Cardiac septum (tissue), 1 donor: ENCODE measurements at regions of chr15 and their contacts with region 1.

Region 1: DNA sequence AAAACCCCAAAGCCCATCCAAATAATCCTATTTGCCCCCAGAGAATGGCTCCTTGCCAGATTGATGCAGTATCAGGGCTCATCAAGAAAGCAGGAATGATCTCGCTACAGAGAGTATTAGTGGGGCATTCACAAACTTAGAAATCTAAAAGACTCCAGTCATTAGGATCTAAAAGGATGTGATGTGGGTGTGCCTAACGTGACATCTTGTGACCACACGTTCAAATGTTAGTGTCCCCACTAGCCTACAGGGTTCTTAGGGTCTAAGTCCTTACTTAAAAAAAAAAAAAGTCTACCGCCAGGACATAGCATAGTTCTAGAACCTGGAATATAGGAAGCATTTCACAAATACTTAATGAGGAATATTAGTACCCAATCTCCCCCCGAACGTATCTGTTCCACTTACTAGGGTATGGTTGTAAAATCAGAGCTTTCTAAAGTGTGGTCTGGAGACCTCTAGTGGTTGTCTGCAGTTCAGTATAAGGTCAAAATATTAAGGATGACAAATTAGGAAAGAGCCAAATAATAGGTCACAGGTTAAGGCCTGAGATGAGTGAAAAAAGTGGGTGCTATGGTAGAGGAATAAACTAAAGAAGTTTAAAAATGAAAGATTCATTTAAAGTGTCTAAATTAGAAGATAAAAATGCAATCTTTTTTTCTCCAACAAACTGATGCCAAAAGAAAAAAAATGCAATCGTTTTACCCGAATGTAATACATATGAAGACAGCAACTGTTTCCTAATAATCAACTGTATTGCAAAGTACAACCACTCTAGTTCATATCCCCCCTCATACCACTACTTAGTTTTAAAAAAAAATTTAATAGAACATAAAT is 4.2 kb upstream of the CHRM5 start:
- DNase-seq: no peak

Region 2: GRCh38 chr15:33742800-33743199 is 221.2 kb before region 1 on chr15:
- intact Hi-C with region 1: loop called (anchors 10 kb)
- DNase-seq: no peak

Region 3: GRCh38 chr15:33915571-33916407 is 48.3 kb before region 1 on chr15:
- intact Hi-C with region 1: no loop called
- DNase-seq: no peak